CD8-positive, alpha-beta memory T cell (primary cell): ENCODE measurements at regions of chr2 and their contacts with region 1.

Region 1: GRCh38 chr2:106095478-106096298 is 98.4 kb downstream of the UXS1 start:
- DNase-seq: peak; percentile 70 to 91 (median 86)
- H3K4me3 ChIP-seq: peak overlapping the region; percentile 74
- H3K4me3 Mint-ChIP-seq: peak overlapping the region; percentile 79 to 91 (median 81)
- H3K27ac ChIP-seq: peak overlapping the region; percentile 60
- H3K27ac Mint-ChIP-seq: peak overlapping the region; percentile 92 to 99 (median 95)
- H3K4me1 ChIP-seq: peaks cover 68% of the 10 kb centered on the region
- H3K4me1 Mint-ChIP-seq: peaks cover 62 to 86% (median 70%) of the 10 kb centered on the region in 3 donors
- H3K27me3 ChIP-seq: no peaks in the 10 kb centered on the region
- H3K27me3 Mint-ChIP-seq: no peaks in the 10 kb centered on the region

Region 2: GRCh38 chr2:105919826-105920225 is 175.9 kb before region 1 on chr2:
- CTCF ChIA-PET with region 1: interaction called, 14 read pairs
- POLR2A ChIA-PET with region 1: interaction called, 6 read pairs
- DNase-seq: peak; percentile 33 to 72 (median 44)
- H3K4me3 ChIP-seq: no peak overlapping the region
- H3K4me3 Mint-ChIP-seq: no peak overlapping the region
- H3K27ac ChIP-seq: no peak overlapping the region
- H3K27ac Mint-ChIP-seq: peak overlapping the region in 1 of 8 donors; percentile 8
- H3K4me1 ChIP-seq: peaks cover 12% of the 10 kb centered on the region
- H3K4me1 Mint-ChIP-seq: peaks cover 23 to 34% (median 33%) of the 10 kb centered on the region in 3 donors
- H3K27me3 ChIP-seq: no peaks in the 10 kb centered on the region
- H3K27me3 Mint-ChIP-seq: no peaks in the 10 kb centered on the region

Region 3: GRCh38 chr2:106124905-106125405 is 29.3 kb after region 1 on chr2:
- CTCF ChIA-PET with region 1: no interaction called
- POLR2A ChIA-PET with region 1: no interaction called
- DNase-seq: no peak
- H3K4me3 ChIP-seq: no peak overlapping the region
- H3K4me3 Mint-ChIP-seq: no peak overlapping the region
- H3K27ac ChIP-seq: no peak overlapping the region
- H3K27ac Mint-ChIP-seq: peak overlapping the region in 4 of 8 donors; percentile 13 to 79 (median 18)
- H3K4me1 ChIP-seq: no peaks in the 10 kb centered on the region
- H3K4me1 Mint-ChIP-seq: peaks cover 7 to 28% (median 18%) of the 10 kb centered on the region in 3 donors
- H3K27me3 ChIP-seq: no peaks in the 10 kb centered on the region
- H3K27me3 Mint-ChIP-seq: no peaks in the 10 kb centered on the region